Head of caudate nucleus (tissue), 42 donors: ENCODE measurements at regions of chr7 and their contacts with region 1.

Region 1: GRCh38 chr7:97117372-97118188 is at the start of gene SDHAF3:
- DNase-seq: peak; percentile 88 to 98 (median 96)

Region 2: DNA sequence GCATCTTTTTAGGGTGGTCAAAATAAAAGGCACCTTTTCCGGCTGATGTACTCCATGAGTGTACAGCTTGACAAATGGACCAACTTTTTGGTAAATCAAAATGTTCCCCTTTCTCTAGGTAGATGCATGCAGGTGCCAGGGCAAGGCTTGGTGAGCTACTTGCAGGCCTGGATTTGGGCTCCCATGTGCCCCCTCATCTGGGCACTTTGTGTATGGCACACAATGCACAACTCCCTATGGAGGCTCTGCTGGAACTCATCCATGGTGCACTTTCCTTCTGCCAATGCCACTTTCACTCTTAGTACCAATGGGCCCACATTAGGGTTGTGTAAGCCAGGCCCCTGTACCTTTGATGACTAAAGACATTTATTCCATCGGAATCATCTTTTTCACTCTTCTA is 300.7 kb after region 1 on chr7:
- intact Hi-C with region 1: no loop called
- DNase-seq: no peak

Region 3: DNA sequence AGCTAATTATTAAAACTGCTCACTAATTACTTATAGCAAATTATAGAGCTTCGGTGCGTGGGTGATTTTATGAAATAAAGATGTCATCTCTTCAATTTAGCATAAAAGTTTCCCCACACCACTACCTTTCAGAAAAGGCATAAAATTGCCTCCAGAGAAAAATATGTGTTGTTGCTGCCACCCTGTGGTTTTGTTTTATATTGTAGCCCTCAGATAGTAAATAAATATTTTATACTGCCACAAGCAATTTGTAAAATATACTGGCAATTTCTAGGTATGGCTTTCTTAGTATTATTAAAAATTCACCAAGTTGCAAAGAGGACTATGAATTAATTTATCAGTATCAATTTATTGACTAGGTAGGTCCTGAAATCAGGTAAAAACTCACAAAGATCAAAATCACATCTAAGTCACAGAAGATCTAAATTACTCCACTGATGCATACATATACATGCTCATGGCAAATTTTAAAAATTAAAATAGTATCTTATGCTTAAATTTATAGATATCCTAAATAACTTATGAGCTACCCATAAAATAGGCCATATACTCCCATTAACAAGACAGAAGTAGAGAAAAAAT is 728.1 kb after region 1 on chr7:
- intact Hi-C with region 1: loop called (anchors 10 kb)
- DNase-seq: peak in 6 of 42 donors; percentile 8 to 64 (median 16)